ENCODE measurements at regions of chr18 and their contacts with region 1.

Region 1: GRCh38 chr18:33579349-33580215 is 1.6 kb downstream of the ASXL3 start:
- DNase-seq: no peak
- ATAC-seq: no peak
- H3K4me3 Mint-ChIP-seq: no peak overlapping the region
- H3K27ac Mint-ChIP-seq: no peak overlapping the region
- H3K4me1 Mint-ChIP-seq: peaks cover 5% of the 10 kb centered on the region
- H3K27me3 Mint-ChIP-seq: peaks cover 18% of the 10 kb centered on the region

Region 2: GRCh38 chr18:33532978-33533377 is 46.6 kb before region 1 on chr18:
- CTCF ChIA-PET with region 1: no interaction called
- POLR2A ChIA-PET with region 1: no interaction called
- intact Hi-C with region 1: loop called in 1 of 2 experiments (anchors 10 kb)
- DNase-seq: no peak
- ATAC-seq: no peak
- H3K4me3 Mint-ChIP-seq: no peak overlapping the region
- H3K27ac Mint-ChIP-seq: no peak overlapping the region
- H3K4me1 Mint-ChIP-seq: no peaks in the 10 kb centered on the region
- H3K27me3 Mint-ChIP-seq: no peaks in the 10 kb centered on the region

Region 3: GRCh38 chr18:33593281-33593680 is 13.7 kb after region 1 on chr18:
- CTCF ChIA-PET with region 1: no interaction called
- POLR2A ChIA-PET with region 1: no interaction called
- intact Hi-C with region 1: no loop called
- DNase-seq: no peak
- ATAC-seq: no peak
- H3K4me3 Mint-ChIP-seq: no peak overlapping the region
- H3K27ac Mint-ChIP-seq: no peak overlapping the region
- H3K4me1 Mint-ChIP-seq: no peaks in the 10 kb centered on the region
- H3K27me3 Mint-ChIP-seq: no peaks in the 10 kb centered on the region

Region 4: GRCh38 chr18:33673689-33674088 is 94.1 kb after region 1 on chr18:
- CTCF ChIA-PET with region 1: no interaction called
- POLR2A ChIA-PET with region 1: no interaction called
- intact Hi-C with region 1: no loop called
- DNase-seq: no peak
- ATAC-seq: no peak
- H3K4me3 Mint-ChIP-seq: no peak overlapping the region
- H3K27ac Mint-ChIP-seq: no peak overlapping the region
- H3K4me1 Mint-ChIP-seq: no peaks in the 10 kb centered on the region
- H3K27me3 Mint-ChIP-seq: no peaks in the 10 kb centered on the region

Region 5: GRCh38 chr18:34023471-34023870 is 443.9 kb after region 1 on chr18:
- CTCF ChIA-PET with region 1: no interaction called
- POLR2A ChIA-PET with region 1: no interaction called
- intact Hi-C with region 1: no loop called
- DNase-seq: no peak
- ATAC-seq: no peak
- H3K4me3 Mint-ChIP-seq: no peak overlapping the region
- H3K27ac Mint-ChIP-seq: no peak overlapping the region
- H3K4me1 Mint-ChIP-seq: no peaks in the 10 kb centered on the region
- H3K27me3 Mint-ChIP-seq: no peaks in the 10 kb centered on the region

Measured in activated CD4-positive, alpha-beta T cell treated with anti-CD3 and anti-CD28 coated beads for 36 hours (primary cell).